Caco-2 (cell line): ENCODE measurements at regions of chr11 and their contacts with region 1.

Region 1: DNA sequence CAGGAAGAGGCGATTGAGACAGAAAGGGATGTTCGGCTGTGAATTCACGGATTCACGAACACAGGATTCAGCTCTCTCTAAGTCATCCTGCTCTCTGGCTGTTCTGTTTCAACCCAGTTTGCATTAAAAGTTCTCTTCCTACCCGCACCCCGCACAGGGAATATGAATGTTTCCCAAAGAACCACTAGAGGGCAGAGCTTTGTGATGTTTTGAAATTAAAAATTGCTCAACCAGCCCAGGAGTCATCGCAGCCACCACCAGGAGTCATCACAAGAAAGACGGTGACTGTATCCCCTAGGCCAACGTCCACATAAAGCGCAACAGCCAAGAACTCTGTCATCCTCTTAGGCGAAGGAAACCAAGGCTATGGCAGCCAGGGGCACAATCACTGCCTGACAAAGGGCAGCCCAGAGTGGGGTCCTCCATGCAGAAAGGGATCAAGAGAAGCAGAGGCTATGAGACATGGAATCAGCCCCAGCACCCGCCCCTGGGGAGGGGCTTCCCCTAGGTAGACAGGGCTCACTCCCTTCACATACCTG is 122.4 kb downstream of the WT1 start:
- DNase-seq: peak; percentile 48 to 58
- H3K4me3 ChIP-seq: no peak overlapping the region
- H3K4me3 Mint-ChIP-seq: no peak overlapping the region
- H3K27ac Mint-ChIP-seq: no peak overlapping the region
- H3K4me1 ChIP-seq: no peaks in the 10 kb centered on the region
- H3K4me1 Mint-ChIP-seq: peaks cover 13% of the 10 kb centered on the region
- H3K27me3 ChIP-seq: no peaks in the 10 kb centered on the region
- H3K27me3 Mint-ChIP-seq: no peaks in the 10 kb centered on the region
- CTCF ChIP-seq: peak; percentile 45 to 59

Region 2: GRCh38 chr11:32448232-32448631 is 135.3 kb after region 1 on chr11:
- CTCF ChIA-PET with region 1: no interaction called
- POLR2A ChIA-PET with region 1: no interaction called
- intact Hi-C with region 1: loop called (anchors 5 kb)
- DNase-seq: peak in 1 of 2 experiments; percentile 56
- H3K4me3 ChIP-seq: no peak overlapping the region
- H3K4me3 Mint-ChIP-seq: no peak overlapping the region
- H3K27ac Mint-ChIP-seq: no peak overlapping the region
- H3K4me1 ChIP-seq: peaks cover 4% of the 10 kb centered on the region
- H3K4me1 Mint-ChIP-seq: peaks cover 7% of the 10 kb centered on the region
- H3K27me3 ChIP-seq: no peaks in the 10 kb centered on the region; the same call in 1 of the 2 replicates
- H3K27me3 Mint-ChIP-seq: peaks cover 8% of the 10 kb centered on the region
- CTCF ChIP-seq: peak; percentile 32 to 49